ENCODE measurements at regions of chr12 and their contacts with region 1.

Region 1: DNA sequence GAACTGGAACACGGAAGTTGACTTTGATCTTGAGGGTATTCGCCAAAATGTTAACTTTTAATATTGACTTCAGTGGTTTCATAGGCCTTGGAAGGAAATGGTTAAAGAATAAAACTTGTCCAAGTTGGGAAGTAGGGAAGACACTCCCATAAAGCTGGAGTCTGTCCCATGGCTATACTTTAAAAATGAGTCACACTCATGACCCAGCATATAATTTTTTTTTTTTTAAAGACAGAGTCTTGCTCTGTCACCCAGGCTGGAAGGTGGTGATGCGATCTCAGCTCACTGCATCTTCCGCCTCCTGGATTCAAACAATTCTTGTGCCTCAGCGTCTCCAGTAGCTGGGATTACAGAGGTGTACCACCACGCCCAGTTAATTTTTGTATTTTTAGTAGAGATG is 19.6 kb downstream of the TMPRSS12 start:
- DNase-seq: peak; percentile 55
- H3K4me3 ChIP-seq: no peak overlapping the region
- H3K27ac ChIP-seq: peak overlapping the region; percentile 19
- H3K4me1 ChIP-seq: peaks cover 4% of the 10 kb centered on the region
- H3K27me3 ChIP-seq: no peaks in the 10 kb centered on the region
- CTCF ChIP-seq: no peak

Region 2: DNA sequence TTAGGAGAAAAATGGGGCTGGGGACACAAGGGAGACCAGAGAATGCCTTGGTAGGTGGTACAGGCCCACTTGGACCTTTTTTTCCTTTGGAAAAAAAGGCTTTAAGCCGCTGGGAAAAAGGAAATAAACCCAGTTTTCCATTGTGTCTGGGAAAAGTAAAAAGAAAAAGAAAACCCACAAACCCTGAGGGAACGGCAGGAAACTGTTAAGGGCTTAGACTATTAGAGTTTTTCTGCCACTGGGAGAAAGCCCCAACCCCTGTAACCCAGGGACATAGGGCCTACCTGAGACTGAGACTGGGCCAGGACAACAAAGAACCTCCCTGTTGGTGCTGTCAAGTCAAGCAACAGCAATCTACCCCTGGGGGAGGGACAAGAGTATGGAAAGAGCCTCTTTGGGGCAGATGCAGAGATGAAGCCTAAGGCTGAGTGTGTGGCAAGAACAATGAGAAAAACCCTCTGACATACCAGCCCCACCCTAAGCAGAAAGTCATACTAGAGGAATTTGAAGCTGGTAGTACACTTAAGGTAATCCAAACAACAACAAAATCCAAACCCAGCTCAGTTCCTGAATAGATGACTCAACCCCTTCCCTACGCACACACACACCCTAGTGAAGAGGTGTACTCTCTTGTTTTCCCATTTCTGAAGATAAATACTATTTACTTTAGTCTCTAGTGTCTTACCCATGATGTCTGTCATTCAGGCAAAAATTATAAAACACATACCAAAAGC is 75.7 kb before region 1 on chr12:
- CTCF ChIA-PET with region 1: no interaction called
- dilution Hi-C with region 1: loop called (anchors 5 kb)
- in situ Hi-C with region 1: no loop called
- intact Hi-C with region 1: no loop called
- DNase-seq: peak; percentile 98
- H3K4me3 ChIP-seq: peak overlapping the region in 1 of 3 experiments; percentile 7
- H3K27ac ChIP-seq: peak overlapping the region; percentile 98
- H3K4me1 ChIP-seq: peaks cover 26% of the 10 kb centered on the region
- H3K27me3 ChIP-seq: no peaks in the 10 kb centered on the region
- CTCF ChIP-seq: no peak